MCF 10A (cell line): ENCODE measurements at regions of chrX and their contacts with region 1.

Region 1: DNA sequence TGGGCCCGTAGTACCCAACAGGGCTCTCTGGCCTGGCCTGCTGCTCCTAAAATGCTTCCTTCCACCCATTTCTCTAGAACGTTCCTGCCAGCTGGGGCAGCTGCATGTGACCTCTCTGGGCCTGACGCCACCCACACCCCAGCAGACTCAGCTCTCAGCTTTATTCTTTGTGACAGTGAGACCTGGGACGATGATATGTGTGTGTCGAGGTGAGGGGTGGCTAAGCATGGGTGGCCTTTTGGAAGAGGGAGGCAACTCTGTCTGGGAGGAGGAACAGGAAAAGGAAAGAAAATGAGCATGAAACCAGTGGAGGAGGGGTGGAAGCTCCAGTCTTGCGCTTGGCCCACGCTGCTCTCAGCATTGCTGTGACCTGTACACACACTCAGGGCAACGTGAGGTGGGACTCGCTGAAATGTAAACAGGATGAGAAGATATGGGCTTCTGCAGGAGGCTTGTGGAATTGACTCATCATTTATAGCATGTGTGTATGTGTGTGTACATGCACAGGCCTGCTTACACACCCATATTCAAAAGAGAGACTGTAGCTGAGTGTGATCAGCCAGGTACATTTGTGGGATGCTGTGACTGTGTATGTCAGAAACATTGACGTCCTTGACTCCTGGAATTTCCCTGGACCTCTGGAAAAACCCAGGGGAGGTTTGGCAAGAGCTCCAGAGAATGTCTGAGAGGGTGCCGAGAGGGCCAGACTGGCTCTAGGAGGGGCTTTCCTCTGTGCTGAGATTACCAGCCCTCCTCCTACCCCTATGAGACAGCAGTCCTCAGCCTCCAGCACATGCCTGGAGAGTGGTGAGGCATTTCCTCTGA is 137.9 kb downstream of the PJA1 start:
- DNase-seq: peak; percentile 65
- H3K4me3 Mint-ChIP-seq: no peak overlapping the region
- H3K27ac Mint-ChIP-seq: peak overlapping the region; percentile 17
- H3K4me1 Mint-ChIP-seq: peaks cover 28% of the 10 kb centered on the region
- H3K27me3 Mint-ChIP-seq: peaks cover 47% of the 10 kb centered on the region
- CTCF ChIP-seq: no peak

Region 2: DNA sequence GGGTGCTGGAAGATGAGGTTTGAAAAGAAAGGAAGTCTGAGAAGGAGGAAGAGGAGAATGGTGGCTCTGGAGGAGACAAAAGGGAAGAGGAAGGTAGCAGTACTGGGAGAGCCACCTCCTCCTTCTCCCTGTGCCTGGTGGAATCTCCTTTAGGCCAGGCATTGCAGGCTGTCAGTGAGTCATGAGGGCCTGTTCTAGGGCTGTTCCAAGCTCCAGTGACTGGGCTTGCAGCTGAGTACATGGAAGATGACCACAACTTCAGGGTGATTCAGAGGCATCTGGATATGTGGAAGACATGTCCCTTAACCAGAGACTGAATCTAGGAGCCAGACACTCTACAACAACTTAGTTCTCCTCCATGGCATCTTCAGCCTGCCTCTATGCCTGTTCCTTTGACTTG is 90.8 kb before region 1 on chrX:
- CTCF ChIA-PET with region 1: interaction called, 3 read pairs
- POLR2A ChIA-PET with region 1: interaction called, 4 read pairs
- intact Hi-C with region 1: loop called (anchors 5 kb)
- DNase-seq: peak; percentile 79
- H3K4me3 Mint-ChIP-seq: no peak overlapping the region
- H3K27ac Mint-ChIP-seq: no peak overlapping the region
- H3K4me1 Mint-ChIP-seq: peaks cover 21% of the 10 kb centered on the region
- H3K27me3 Mint-ChIP-seq: peaks cover 35% of the 10 kb centered on the region
- CTCF ChIP-seq: no peak

Region 3: GRCh38 chrX:68995780-68996551 is 31.4 kb before region 1 on chrX:
- CTCF ChIA-PET with region 1: interaction called, 5 read pairs
- POLR2A ChIA-PET with region 1: interaction called, 15 read pairs
- intact Hi-C with region 1: loop called (anchors 1 kb)
- DNase-seq: peak; percentile 62
- H3K4me3 Mint-ChIP-seq: peak overlapping the region; percentile 47
- H3K27ac Mint-ChIP-seq: peak overlapping the region; percentile 17
- H3K4me1 Mint-ChIP-seq: peaks cover 20% of the 10 kb centered on the region
- H3K27me3 Mint-ChIP-seq: peaks cover 37% of the 10 kb centered on the region
- CTCF ChIP-seq: no peak

Region 4: DNA sequence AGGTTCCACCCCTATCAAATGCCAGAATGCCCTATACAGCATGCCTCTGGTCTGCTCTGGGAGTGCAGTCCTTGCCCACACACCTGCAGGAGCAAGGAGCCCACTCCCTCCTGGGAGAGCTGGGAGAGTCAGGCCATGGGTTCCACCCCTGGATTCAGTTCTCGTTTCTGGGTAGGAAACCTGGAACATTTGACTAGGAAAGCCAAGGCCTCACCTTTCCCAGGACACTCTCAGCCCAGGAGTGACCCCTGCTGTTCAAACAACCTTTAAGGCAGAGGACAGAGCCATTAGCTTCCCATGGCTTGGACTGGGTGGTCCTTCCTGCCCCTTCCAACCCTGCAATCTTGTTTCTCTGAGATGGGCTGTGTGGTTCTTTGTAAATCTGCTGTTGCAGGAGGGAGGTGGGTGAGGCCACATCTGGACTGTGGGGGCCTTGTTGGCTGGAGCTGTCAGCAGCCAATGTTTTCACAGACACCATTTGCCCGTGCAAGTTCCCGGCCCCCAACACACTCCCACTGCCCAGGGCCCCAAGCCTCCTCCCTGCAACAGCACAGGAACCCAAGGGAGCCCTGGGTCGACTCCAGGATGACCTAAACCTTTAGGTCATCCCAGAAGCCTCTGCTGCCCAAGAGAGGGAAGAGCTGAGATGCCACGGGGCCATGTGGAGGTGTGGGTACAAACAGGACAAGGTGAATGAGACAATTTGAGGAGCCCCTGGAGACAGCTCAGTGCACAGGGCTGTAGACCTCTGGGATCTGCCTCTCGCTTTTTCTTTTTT is 33.4 kb after region 1 on chrX:
- CTCF ChIA-PET with region 1: interaction called, 17 read pairs
- POLR2A ChIA-PET with region 1: interaction called, 4 read pairs
- intact Hi-C with region 1: no loop called
- DNase-seq: peak; percentile 65
- H3K4me3 Mint-ChIP-seq: no peak overlapping the region
- H3K27ac Mint-ChIP-seq: no peak overlapping the region
- H3K4me1 Mint-ChIP-seq: no peaks in the 10 kb centered on the region
- H3K27me3 Mint-ChIP-seq: peaks cover 24% of the 10 kb centered on the region
- CTCF ChIP-seq: peak; percentile 27